ENCODE measurements at regions of chr3 and their contacts with region 1.

Region 1: DNA sequence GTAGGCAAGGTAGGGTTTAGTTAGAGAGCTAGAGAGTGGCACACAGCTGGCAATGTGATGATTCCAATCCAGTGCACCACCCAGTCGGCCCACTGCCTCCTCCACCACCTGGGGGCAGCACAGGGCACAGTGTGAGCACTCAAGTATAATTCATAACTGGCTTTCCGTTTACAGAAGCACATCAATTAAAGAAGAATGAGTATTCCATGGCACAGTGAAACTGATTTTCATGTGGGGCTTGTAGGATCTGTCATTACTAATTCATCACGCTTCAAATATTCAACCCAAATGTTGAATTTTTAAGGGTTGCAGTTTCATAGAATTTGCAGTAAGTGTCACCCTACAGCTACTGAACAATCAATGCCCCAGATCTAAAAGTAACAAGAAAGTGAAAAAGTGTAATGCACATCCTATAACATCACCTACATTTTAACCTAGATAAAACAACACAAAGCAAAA is 149.9 kb downstream of the IGSF11 start:
- DNase-seq: no peak
- H3K4me3 ChIP-seq: no peak overlapping the region
- H3K27ac ChIP-seq: no peak overlapping the region
- H3K4me1 ChIP-seq: no peaks in the 10 kb centered on the region
- H3K27me3 ChIP-seq: no peaks in the 10 kb centered on the region
- CTCF ChIP-seq: peak; percentile 92 to 96 (median 94)

Region 2: GRCh38 chr3:119098619-119099222 is 213.9 kb after region 1 on chr3:
- dilution Hi-C with region 1: loop called (anchors 25 kb)
- DNase-seq: no peak
- H3K4me3 ChIP-seq: no peak overlapping the region
- H3K27ac ChIP-seq: no peak overlapping the region
- H3K4me1 ChIP-seq: no peaks in the 10 kb centered on the region
- H3K27me3 ChIP-seq: no peaks in the 10 kb centered on the region
- CTCF ChIP-seq: peak in 2 of 3 experiments; percentile 46 to 51